Mucosa of descending colon (tissue), 3 donors: ENCODE measurements at regions of chr13 and their contacts with region 1.

Region 1: GRCh38 chr13:102596147-102597028 is at the start of gene TPP2:
- DNase-seq: peak; percentile 99 to 100 (median 99)
- ATAC-seq: peak; percentile 96
- H3K4me3 ChIP-seq: peak within 1 kb of the TSS; percentile 98
- H3K4me1 ChIP-seq: peaks cover 29% of the 10 kb centered on the region
- CTCF ChIP-seq: no peak
- total RNA-seq, gene TPP2: 37.6 to 44.0 (median 38.2) TPM

Region 2: GRCh38 chr13:102845630-102846260 is 249.4 kb after region 1 on chr13 and contains the start of gene ERCC5:
- intact Hi-C with region 1: loop called in 1 of 2 experiments (anchors 5 kb)
- DNase-seq: peak; percentile 96 to 97 (median 97)
- ATAC-seq: peak; percentile 94
- H3K4me3 ChIP-seq: peak within 1 kb of the TSS; percentile 74
- H3K4me1 ChIP-seq: peaks cover 18% of the 10 kb centered on the region
- CTCF ChIP-seq: no peak
- total RNA-seq, gene ERCC5: 58.6 to 85.0 (median 62.7) TPM

Region 3: GRCh38 chr13:103403148-103403740 is 806.9 kb after region 1 on chr13:
- intact Hi-C with region 1: no loop called
- DNase-seq: peak in 1 of 3 donors; percentile 21
- ATAC-seq: peak; percentile 96
- H3K4me3 ChIP-seq: no peak overlapping the region
- H3K4me1 ChIP-seq: peaks cover 5% of the 10 kb centered on the region
- CTCF ChIP-seq: no peak